Activated CD4-positive, alpha-beta T cell treated with anti-CD3 and anti-CD28 coated beads, Interleukin-2, amount 10 ng/mL, durations not matched to agents 24 days and 14 days (primary cell): ENCODE measurements at regions of chr13 and their contacts with region 1.

Region 1: DNA sequence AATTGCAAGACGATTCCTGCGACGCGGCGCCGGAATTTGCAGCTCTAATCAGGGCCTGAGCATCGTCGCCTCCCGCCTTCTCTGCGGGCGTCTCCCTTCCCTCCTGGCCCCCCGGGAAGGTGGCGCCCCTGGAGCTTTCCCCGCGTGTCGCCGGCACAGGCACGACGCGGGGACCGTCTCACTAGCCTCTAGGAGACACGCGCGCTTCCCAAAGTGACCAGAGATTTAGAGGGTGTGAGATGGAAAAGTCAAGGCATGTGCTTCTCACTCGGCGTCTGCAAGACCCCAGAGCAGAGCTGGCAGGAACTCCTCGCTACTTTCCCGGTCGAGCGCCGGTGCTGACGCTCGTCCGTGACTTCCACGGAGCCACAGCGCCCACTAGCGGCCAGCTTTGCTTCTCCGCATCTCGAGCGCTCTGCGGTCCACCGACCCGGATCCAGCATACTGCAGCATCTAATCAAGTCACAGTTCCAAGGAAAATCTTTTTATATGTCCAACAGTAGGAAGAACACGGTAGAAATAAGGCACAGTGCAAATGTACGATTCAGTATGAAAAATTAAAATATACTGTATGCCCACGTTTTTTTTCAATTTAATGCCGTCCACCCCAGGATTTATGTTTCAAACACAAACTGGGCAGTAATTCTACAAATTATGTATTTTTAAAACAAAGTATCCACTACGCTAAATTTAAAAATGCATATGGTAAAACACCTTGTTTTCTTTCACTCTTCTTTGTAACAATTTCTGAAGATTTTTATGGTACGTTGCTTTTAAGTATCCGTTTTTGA is 977 bp upstream of the EFNB2 start:
- DNase-seq: peak; percentile 96
- H3K4me3 Mint-ChIP-seq: peak overlapping the region; percentile 82
- H3K27ac Mint-ChIP-seq: peak overlapping the region; percentile 84
- H3K4me1 Mint-ChIP-seq: peaks cover 15% of the 10 kb centered on the region
- H3K27me3 Mint-ChIP-seq: peaks cover 27% of the 10 kb centered on the region

Region 2: DNA sequence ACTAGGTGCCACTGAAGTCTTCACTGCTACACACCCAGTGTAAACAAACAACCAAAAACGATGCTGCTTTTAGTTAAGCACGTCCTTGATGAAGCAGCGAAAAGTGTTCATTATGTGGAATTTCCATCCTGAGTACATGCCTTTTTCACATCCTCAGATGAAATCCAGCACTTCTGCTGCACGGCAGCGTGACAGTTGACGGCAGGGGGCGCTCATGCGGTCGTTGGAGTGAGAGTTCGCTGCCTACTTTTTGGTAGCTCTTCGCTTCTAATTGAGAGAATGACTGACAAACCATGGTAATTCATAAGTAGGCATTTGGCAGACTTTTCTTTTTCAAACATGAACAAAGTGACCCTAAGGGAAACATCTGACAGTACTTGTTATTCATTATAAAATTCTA is 1125.8 kb before region 1 on chr13:
- intact Hi-C with region 1: loop called (anchors 10 kb)
- DNase-seq: peak; percentile 70
- H3K4me3 Mint-ChIP-seq: no peak overlapping the region
- H3K27ac Mint-ChIP-seq: no peak overlapping the region
- H3K4me1 Mint-ChIP-seq: no peaks in the 10 kb centered on the region
- H3K27me3 Mint-ChIP-seq: no peaks in the 10 kb centered on the region

Region 3: GRCh38 chr13:106490569-106491321 is 45.7 kb before region 1 on chr13:
- intact Hi-C with region 1: loop called (anchors 2 kb)
- DNase-seq: peak; percentile 74
- H3K4me3 Mint-ChIP-seq: peak overlapping the region; percentile 72
- H3K27ac Mint-ChIP-seq: no peak overlapping the region
- H3K4me1 Mint-ChIP-seq: peaks cover 13% of the 10 kb centered on the region
- H3K27me3 Mint-ChIP-seq: peaks cover 45% of the 10 kb centered on the region

Region 4: GRCh38 chr13:106567474-106568298 is 31.2 kb after region 1 on chr13 and contains the start of gene ARGLU1:
- intact Hi-C with region 1: loop called (anchors 1 kb)
- DNase-seq: peak; percentile 99
- H3K4me3 Mint-ChIP-seq: peak within 1 kb of the TSS; percentile 97
- H3K27ac Mint-ChIP-seq: peak within 1 kb of the TSS; percentile 95
- H3K4me1 Mint-ChIP-seq: peaks cover 46% of the 10 kb centered on the region
- H3K27me3 Mint-ChIP-seq: no peaks in the 10 kb centered on the region
- total RNA-seq, gene ARGLU1: 86.6 and 96.8 TPM in 2 replicates

Region 5: DNA sequence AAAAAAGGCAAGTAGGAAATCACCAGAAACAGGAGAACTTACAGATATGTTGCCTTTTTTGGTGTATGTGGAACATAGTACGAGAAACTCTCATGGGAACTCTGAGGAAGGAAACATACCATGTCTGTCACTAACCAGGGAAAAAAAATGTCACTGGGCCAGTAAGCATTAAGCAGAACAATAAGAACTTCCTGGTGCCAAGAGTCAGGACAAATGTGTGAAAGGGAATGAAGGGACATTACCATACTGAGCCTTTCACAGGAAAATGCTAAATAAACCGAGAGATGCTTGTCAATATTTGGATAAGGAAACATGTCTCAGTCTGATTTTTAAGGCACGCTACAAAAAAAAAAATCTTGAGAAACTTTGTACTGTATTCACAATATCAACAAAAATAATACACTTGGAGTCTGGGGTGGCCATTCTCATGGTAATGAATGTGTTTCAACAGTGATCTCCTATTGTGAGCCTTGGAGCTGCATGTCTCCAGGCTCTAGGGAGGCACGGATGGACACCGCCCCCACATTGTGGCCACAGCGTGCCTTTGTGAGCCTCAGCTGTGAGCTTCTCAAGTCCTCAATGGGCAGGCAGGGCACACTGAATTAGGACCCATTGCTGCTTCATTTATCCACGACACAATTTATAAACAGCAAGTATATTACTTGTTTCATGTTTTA is 144.5 kb after region 1 on chr13:
- intact Hi-C with region 1: no loop called
- DNase-seq: peak; percentile 24
- H3K4me3 Mint-ChIP-seq: no peak overlapping the region
- H3K27ac Mint-ChIP-seq: no peak overlapping the region
- H3K4me1 Mint-ChIP-seq: no peaks in the 10 kb centered on the region
- H3K27me3 Mint-ChIP-seq: no peaks in the 10 kb centered on the region

Region 6: GRCh38 chr13:106917673-106918556 is 381.5 kb after region 1 on chr13:
- intact Hi-C with region 1: loop called (anchors 5 kb)
- DNase-seq: peak; percentile 91
- H3K4me3 Mint-ChIP-seq: peak overlapping the region; percentile 79
- H3K27ac Mint-ChIP-seq: peak overlapping the region; percentile 58
- H3K4me1 Mint-ChIP-seq: no peaks in the 10 kb centered on the region
- H3K27me3 Mint-ChIP-seq: peaks cover 13% of the 10 kb centered on the region